CD4-positive, alpha-beta memory T cell (primary cell): ENCODE measurements at regions of chr11 and their contacts with region 1.

Region 1: GRCh38 chr11:118791111-118791965 is at the start of gene DDX6:
- DNase-seq: peak; percentile 89 to 92 (median 91)
- H3K4me3 ChIP-seq: peak within 1 kb of the TSS; percentile 68 to 98
- H3K4me3 Mint-ChIP-seq: peak within 1 kb of the TSS; percentile 95 to 100 (median 99)
- H3K27ac ChIP-seq: peak within 1 kb of the TSS; percentile 99
- H3K27ac Mint-ChIP-seq: peak within 1 kb of the TSS; percentile 98 to 100 (median 99)
- H3K4me1 ChIP-seq: peaks cover 30% of the 10 kb centered on the region
- H3K4me1 Mint-ChIP-seq: peaks cover 9 to 54% (median 18%) of the 10 kb centered on the region in 4 donors
- H3K27me3 ChIP-seq: no peaks in the 10 kb centered on the region
- H3K27me3 Mint-ChIP-seq: no peaks in the 10 kb centered on the region
- total RNA-seq, gene DDX6: 299 to 304 TPM

Region 2: DNA sequence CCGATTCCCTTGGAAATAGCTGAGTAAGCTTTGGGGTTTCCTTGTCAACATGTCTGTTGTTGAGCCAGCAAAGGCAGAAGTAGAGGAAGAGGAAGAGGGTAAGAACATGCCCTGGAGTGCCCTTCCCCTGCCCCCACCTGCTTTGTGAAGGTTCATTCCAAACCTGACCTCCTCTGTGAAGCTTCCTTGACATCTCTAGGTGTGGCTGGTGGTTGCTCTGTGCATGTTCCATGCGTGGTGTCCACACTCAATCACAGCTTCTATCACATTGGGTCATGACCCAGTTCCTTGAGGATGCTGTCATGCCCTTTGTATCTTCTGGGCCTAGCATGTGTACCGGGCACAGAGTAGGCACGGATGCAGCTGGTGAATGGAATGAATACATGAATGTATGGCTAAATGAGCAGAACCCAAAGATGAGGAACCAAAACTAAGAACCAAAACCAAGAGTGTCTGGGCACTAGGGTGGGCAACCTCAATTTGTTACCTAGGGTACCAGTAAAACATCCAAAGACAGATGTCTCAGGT is 891.2 kb before region 1 on chr11:
- CTCF ChIA-PET with region 1: no interaction called
- POLR2A ChIA-PET with region 1: no interaction called
- intact Hi-C with region 1: no loop called
- DNase-seq: no peak
- H3K4me3 ChIP-seq: no peak overlapping the region
- H3K4me3 Mint-ChIP-seq: no peak overlapping the region
- H3K27ac ChIP-seq: no peak overlapping the region
- H3K27ac Mint-ChIP-seq: peak overlapping the region in 1 of 7 donors; percentile 35
- H3K4me1 ChIP-seq: peaks cover 6% of the 10 kb centered on the region
- H3K4me1 Mint-ChIP-seq: peaks cover 0 to 6% (median 5%) of the 10 kb centered on the region in 4 donors
- H3K27me3 ChIP-seq: no peaks in the 10 kb centered on the region
- H3K27me3 Mint-ChIP-seq: peaks cover 0 to 8% of the 10 kb centered on the region in 2 donors

Region 3: GRCh38 chr11:118184784-118185579 is 606.4 kb before region 1 on chr11:
- CTCF ChIA-PET with region 1: no interaction called
- POLR2A ChIA-PET with region 1: no interaction called
- intact Hi-C with region 1: no loop called
- DNase-seq: no peak
- H3K4me3 ChIP-seq: no peak overlapping the region
- H3K4me3 Mint-ChIP-seq: no peak overlapping the region
- H3K27ac ChIP-seq: no peak overlapping the region
- H3K27ac Mint-ChIP-seq: peak overlapping the region in 1 of 7 donors; percentile 39
- H3K4me1 ChIP-seq: no peaks in the 10 kb centered on the region
- H3K4me1 Mint-ChIP-seq: peaks cover 0 to 4% (median 0%) of the 10 kb centered on the region in 4 donors
- H3K27me3 ChIP-seq: no peaks in the 10 kb centered on the region
- H3K27me3 Mint-ChIP-seq: peaks cover 6 to 19% of the 10 kb centered on the region in 2 donors

Region 4: GRCh38 chr11:118699506-118700220 is 91.7 kb before region 1 on chr11:
- CTCF ChIA-PET with region 1: interaction called, 149 read pairs
- POLR2A ChIA-PET with region 1: interaction called, 98 read pairs
- intact Hi-C with region 1: no loop called
- DNase-seq: peak; percentile 82 to 89 (median 86)
- H3K4me3 ChIP-seq: no peak overlapping the region
- H3K4me3 Mint-ChIP-seq: peak overlapping the region in 7 of 8 donors; percentile 51 to 86 (median 73)
- H3K27ac ChIP-seq: peak overlapping the region; percentile 40
- H3K27ac Mint-ChIP-seq: peak overlapping the region; percentile 83 to 99 (median 98)
- H3K4me1 ChIP-seq: peaks cover 83% of the 10 kb centered on the region
- H3K4me1 Mint-ChIP-seq: peaks cover 33 to 73% (median 49%) of the 10 kb centered on the region in 4 donors
- H3K27me3 ChIP-seq: no peaks in the 10 kb centered on the region
- H3K27me3 Mint-ChIP-seq: no peaks in the 10 kb centered on the region

Region 5: GRCh38 chr11:118807800-118808778 is 16.8 kb after region 1 on chr11:
- CTCF ChIA-PET with region 1: interaction called, 14 read pairs
- POLR2A ChIA-PET with region 1: interaction called, 59 read pairs
- intact Hi-C with region 1: no loop called
- DNase-seq: no peak
- H3K4me3 ChIP-seq: no peak overlapping the region
- H3K4me3 Mint-ChIP-seq: no peak overlapping the region
- H3K27ac ChIP-seq: no peak overlapping the region
- H3K27ac Mint-ChIP-seq: peak overlapping the region in 2 of 7 donors; percentile 19 to 43
- H3K4me1 ChIP-seq: no peaks in the 10 kb centered on the region
- H3K4me1 Mint-ChIP-seq: peaks cover 0 to 9% (median 3%) of the 10 kb centered on the region in 4 donors
- H3K27me3 ChIP-seq: no peaks in the 10 kb centered on the region
- H3K27me3 Mint-ChIP-seq: no peaks in the 10 kb centered on the region

Region 6: DNA sequence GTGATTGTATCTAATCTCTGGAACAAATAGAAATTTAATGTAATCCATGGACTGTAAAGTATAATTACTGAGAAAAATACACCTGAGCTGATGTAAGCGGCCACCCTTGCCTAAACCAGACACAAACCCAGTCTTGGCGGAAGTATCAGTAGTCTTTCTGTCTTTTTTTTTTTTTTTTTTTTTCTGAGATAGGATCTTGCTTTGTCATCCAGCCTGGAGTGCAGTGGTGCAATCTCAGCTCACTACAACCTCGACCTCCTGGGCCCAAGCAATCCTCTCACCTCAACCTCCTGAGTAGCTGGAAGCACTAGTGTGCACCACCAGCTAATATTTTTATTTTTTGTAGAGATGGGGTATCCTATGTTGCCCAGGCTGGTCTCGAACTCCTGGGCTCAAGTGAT is 86.8 kb after region 1 on chr11:
- CTCF ChIA-PET with region 1: interaction called, 62 read pairs
- POLR2A ChIA-PET with region 1: interaction called, 336 read pairs
- intact Hi-C with region 1: loop called (anchors 1 kb)
- DNase-seq: peak; percentile 46 to 64 (median 51)
- H3K4me3 ChIP-seq: no peak overlapping the region
- H3K4me3 Mint-ChIP-seq: peak overlapping the region in 7 of 8 donors; percentile 17 to 90 (median 59)
- H3K27ac ChIP-seq: peak overlapping the region; percentile 69
- H3K27ac Mint-ChIP-seq: peak overlapping the region; percentile 95 to 99 (median 98)
- H3K4me1 ChIP-seq: peaks cover 94% of the 10 kb centered on the region
- H3K4me1 Mint-ChIP-seq: peaks cover 71 to 97% (median 83%) of the 10 kb centered on the region in 4 donors
- H3K27me3 ChIP-seq: no peaks in the 10 kb centered on the region
- H3K27me3 Mint-ChIP-seq: no peaks in the 10 kb centered on the region

Region 7: DNA sequence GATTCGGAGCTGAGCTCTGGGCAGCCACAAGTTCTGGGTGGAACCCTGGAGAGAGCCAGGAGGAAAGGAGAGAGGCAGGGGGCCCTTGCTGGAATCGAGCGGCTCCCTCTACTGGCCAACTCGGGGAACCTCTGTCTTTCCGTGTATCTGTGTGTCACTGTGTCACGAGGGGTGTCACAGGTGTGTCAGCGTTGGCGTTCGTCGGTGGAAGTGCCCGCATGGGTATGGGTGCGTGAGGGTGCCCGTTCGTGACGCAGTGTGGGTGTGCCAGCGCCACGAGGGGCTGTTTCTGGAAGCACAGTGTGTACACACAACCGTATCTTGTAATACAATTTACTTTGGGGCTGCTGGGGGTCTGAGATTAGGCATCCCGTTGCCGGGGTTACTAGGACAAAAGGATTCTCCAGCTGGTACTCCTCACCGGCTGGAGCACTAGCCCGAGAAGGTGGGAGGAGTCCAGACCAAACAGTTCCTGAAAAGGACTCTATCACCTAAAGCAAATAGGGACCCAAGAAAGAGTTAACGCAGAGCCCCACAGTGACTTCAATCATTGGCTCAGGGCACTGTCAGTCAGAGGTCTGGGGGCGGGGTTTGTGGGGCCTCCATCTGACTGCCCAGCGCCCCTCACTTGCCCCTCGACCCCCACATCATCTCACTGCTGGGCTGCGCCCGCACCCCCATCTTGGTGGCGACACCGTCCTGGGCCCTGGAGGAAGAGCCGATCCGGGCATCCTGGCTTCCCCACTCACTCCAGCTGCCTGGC is 137.0 kb after region 1 on chr11:
- CTCF ChIA-PET with region 1: interaction called, 39 read pairs
- POLR2A ChIA-PET with region 1: no interaction called
- intact Hi-C with region 1: loop called (anchors 1 kb)
- DNase-seq: peak; percentile 94 to 100 (median 97)
- H3K4me3 ChIP-seq: peak overlapping the region; percentile 89 to 97
- H3K4me3 Mint-ChIP-seq: peak overlapping the region; percentile 85 to 97 (median 94)
- H3K27ac ChIP-seq: peak overlapping the region; percentile 99
- H3K27ac Mint-ChIP-seq: peak overlapping the region; percentile 97 to 100 (median 100)
- H3K4me1 ChIP-seq: peaks cover 36% of the 10 kb centered on the region
- H3K4me1 Mint-ChIP-seq: peaks cover 26 to 65% (median 34%) of the 10 kb centered on the region in 4 donors
- H3K27me3 ChIP-seq: no peaks in the 10 kb centered on the region
- H3K27me3 Mint-ChIP-seq: peaks cover 1 to 2% of the 10 kb centered on the region in 2 donors

Region 8: DNA sequence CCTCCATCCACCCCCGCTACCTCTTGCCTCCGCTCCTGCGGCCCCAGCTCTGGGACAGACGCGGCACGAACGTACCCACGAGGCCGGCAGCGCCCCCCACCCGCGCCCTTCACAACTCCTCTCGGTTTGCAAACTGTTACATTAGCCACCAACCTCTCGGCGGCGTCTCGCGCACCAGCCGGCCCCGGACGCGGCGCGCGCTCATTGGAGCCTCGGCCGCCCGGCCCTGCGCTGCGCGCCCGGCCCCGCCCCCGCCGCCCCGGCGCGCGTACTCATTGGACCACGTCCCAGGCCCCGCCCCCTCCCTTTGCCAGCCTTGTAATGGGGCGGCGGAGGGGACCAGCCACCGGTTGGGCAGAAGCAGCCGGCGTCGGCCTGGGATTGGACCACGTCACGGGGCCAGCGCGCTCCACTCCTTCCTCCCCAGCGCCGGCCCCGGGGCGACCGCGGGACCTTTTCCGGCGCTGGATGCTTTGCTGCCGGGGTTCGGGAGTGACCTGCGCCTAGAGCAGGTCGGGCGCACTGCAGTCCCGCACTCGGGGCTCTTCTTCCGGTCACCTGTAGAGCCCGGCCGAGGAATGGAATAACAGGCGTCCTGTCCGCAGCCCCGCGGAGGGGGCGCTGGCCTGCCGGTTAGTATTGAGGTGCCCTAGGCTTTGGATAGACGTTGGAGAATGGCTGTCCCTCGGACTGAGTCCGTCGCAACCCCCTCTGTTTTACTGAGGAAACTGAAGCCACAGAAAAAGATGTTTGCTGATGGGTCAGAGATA is 265.8 kb after region 1 on chr11 and contains the start of gene HYOU1:
- CTCF ChIA-PET with region 1: interaction called, 3 read pairs
- POLR2A ChIA-PET with region 1: interaction called, 10 read pairs
- intact Hi-C with region 1: no loop called
- DNase-seq: peak; percentile 98
- H3K4me3 ChIP-seq: peak within 1 kb of the TSS; percentile 82 to 87
- H3K4me3 Mint-ChIP-seq: peak within 1 kb of the TSS; percentile 92 to 98 (median 97)
- H3K27ac ChIP-seq: peak within 1 kb of the TSS; percentile 91
- H3K27ac Mint-ChIP-seq: peak within 1 kb of the TSS; percentile 91 to 98 (median 97)
- H3K4me1 ChIP-seq: peaks cover 25% of the 10 kb centered on the region
- H3K4me1 Mint-ChIP-seq: peaks cover 20 to 52% (median 39%) of the 10 kb centered on the region in 4 donors
- H3K27me3 ChIP-seq: no peaks in the 10 kb centered on the region
- H3K27me3 Mint-ChIP-seq: no peaks in the 10 kb centered on the region
- total RNA-seq, gene HYOU1: 136 to 146 TPM